ENCODE measurements at regions of chr14 and their contacts with region 1.

Region 1: GRCh38 chr14:21917699-21918436 is 244.2 kb upstream of the OR4E1 start:
- DNase-seq: peak; percentile 82
- H3K4me3 Mint-ChIP-seq: peak overlapping the region; percentile 69
- H3K27ac Mint-ChIP-seq: peak overlapping the region; percentile 89
- H3K4me1 Mint-ChIP-seq: peaks cover 58% of the 10 kb centered on the region
- H3K27me3 Mint-ChIP-seq: no peaks in the 10 kb centered on the region

Region 2: DNA sequence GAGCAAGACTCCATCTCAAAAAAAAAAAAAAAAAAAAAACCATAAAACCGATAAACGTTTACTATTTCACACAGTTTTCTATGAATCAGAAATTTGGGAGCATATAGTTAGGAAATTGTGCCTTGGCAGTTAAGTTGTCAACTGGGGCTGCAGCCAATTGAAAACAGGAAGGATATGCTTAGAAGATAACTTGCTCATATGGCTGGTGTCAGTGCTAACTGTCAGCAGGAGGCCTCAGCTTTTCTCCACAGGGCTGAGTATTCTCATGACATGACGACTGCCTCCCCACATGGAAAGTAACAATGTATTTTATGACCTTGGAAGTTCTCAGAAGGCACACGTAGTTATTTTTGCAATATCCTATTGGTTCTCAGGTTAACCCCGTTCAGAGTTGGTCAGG is 732.4 kb before region 1 on chr14:
- CTCF ChIA-PET with region 1: no interaction called
- intact Hi-C with region 1: no loop called
- DNase-seq: no peak
- H3K4me3 Mint-ChIP-seq: no peak overlapping the region
- H3K27ac Mint-ChIP-seq: no peak overlapping the region
- H3K4me1 Mint-ChIP-seq: no peaks in the 10 kb centered on the region
- H3K27me3 Mint-ChIP-seq: peaks cover 6% of the 10 kb centered on the region

Region 3: GRCh38 chr14:21686468-21686867 is 231.4 kb before region 1 on chr14:
- CTCF ChIA-PET with region 1: no interaction called
- intact Hi-C with region 1: no loop called
- DNase-seq: no peak
- H3K4me3 Mint-ChIP-seq: no peak overlapping the region
- H3K27ac Mint-ChIP-seq: no peak overlapping the region
- H3K4me1 Mint-ChIP-seq: no peaks in the 10 kb centered on the region
- H3K27me3 Mint-ChIP-seq: peaks cover 10% of the 10 kb centered on the region

Region 4: GRCh38 chr14:21894003-21894897 is 23.6 kb before region 1 on chr14:
- CTCF ChIA-PET with region 1: interaction called, 6 read pairs
- intact Hi-C with region 1: loop called (anchors 2 kb)
- DNase-seq: peak; percentile 79
- H3K4me3 Mint-ChIP-seq: peak overlapping the region; percentile 71
- H3K27ac Mint-ChIP-seq: peak overlapping the region; percentile 87
- H3K4me1 Mint-ChIP-seq: peaks cover 11% of the 10 kb centered on the region
- H3K27me3 Mint-ChIP-seq: no peaks in the 10 kb centered on the region

Region 5: GRCh38 chr14:21933681-21934080 is 15.8 kb after region 1 on chr14:
- CTCF ChIA-PET with region 1: interaction called, 15 read pairs
- intact Hi-C with region 1: loop called (anchors 1 kb)
- DNase-seq: no peak
- H3K4me3 Mint-ChIP-seq: no peak overlapping the region
- H3K27ac Mint-ChIP-seq: no peak overlapping the region
- H3K4me1 Mint-ChIP-seq: peaks cover 9% of the 10 kb centered on the region
- H3K27me3 Mint-ChIP-seq: no peaks in the 10 kb centered on the region

Region 6: GRCh38 chr14:21978184-21978998 is 60.5 kb after region 1 on chr14:
- CTCF ChIA-PET with region 1: interaction called, 37 read pairs
- intact Hi-C with region 1: loop called (anchors 1 kb)
- DNase-seq: peak; percentile 78
- H3K4me3 Mint-ChIP-seq: peak overlapping the region; percentile 76
- H3K27ac Mint-ChIP-seq: peak overlapping the region; percentile 76
- H3K4me1 Mint-ChIP-seq: peaks cover 26% of the 10 kb centered on the region
- H3K27me3 Mint-ChIP-seq: no peaks in the 10 kb centered on the region

Region 7: GRCh38 chr14:21997300-21997699 is 79.4 kb after region 1 on chr14:
- CTCF ChIA-PET with region 1: interaction called, 9 read pairs
- intact Hi-C with region 1: loop called (anchors 2 kb)
- DNase-seq: peak; percentile 65
- H3K4me3 Mint-ChIP-seq: peak overlapping the region; percentile 92
- H3K27ac Mint-ChIP-seq: peak overlapping the region; percentile 96
- H3K4me1 Mint-ChIP-seq: peaks cover 32% of the 10 kb centered on the region
- H3K27me3 Mint-ChIP-seq: no peaks in the 10 kb centered on the region

Region 8: GRCh38 chr14:22070119-22071011 is 152.5 kb after region 1 on chr14:
- CTCF ChIA-PET with region 1: no interaction called
- intact Hi-C with region 1: no loop called
- DNase-seq: peak; percentile 74
- H3K4me3 Mint-ChIP-seq: peak overlapping the region; percentile 90
- H3K27ac Mint-ChIP-seq: peak overlapping the region; percentile 94
- H3K4me1 Mint-ChIP-seq: peaks cover 41% of the 10 kb centered on the region
- H3K27me3 Mint-ChIP-seq: no peaks in the 10 kb centered on the region

Region 9: GRCh38 chr14:22099942-22100763 is 182.3 kb after region 1 on chr14:
- CTCF ChIA-PET with region 1: interaction called, 3 read pairs
- intact Hi-C with region 1: loop called (anchors 2 kb)
- DNase-seq: peak; percentile 77
- H3K4me3 Mint-ChIP-seq: no peak overlapping the region
- H3K27ac Mint-ChIP-seq: peak overlapping the region; percentile 73
- H3K4me1 Mint-ChIP-seq: peaks cover 35% of the 10 kb centered on the region
- H3K27me3 Mint-ChIP-seq: no peaks in the 10 kb centered on the region

Region 10: GRCh38 chr14:22448905-22449599 is 531.2 kb after region 1 on chr14:
- CTCF ChIA-PET with region 1: no interaction called
- intact Hi-C with region 1: no loop called
- DNase-seq: no peak
- H3K4me3 Mint-ChIP-seq: no peak overlapping the region
- H3K27ac Mint-ChIP-seq: no peak overlapping the region
- H3K4me1 Mint-ChIP-seq: no peaks in the 10 kb centered on the region
- H3K27me3 Mint-ChIP-seq: no peaks in the 10 kb centered on the region